ENCODE measurements at regions of chr14 and their contacts with region 1.

Region 1: GRCh38 chr14:23446291-23446851 is 10.9 kb upstream of the MYH7 start:
- DNase-seq: no peak
- ATAC-seq: peak; percentile 27

Region 2: GRCh38 chr14:23245282-23245681 is 201.1 kb before region 1 on chr14:
- intact Hi-C with region 1: no loop called
- DNase-seq: no peak
- ATAC-seq: no peak

Region 3: GRCh38 chr14:23327947-23328744 is 118.2 kb before region 1 on chr14:
- intact Hi-C with region 1: loop called (anchors 5 kb)
- DNase-seq: no peak
- ATAC-seq: peak; percentile 68

Region 4: DNA sequence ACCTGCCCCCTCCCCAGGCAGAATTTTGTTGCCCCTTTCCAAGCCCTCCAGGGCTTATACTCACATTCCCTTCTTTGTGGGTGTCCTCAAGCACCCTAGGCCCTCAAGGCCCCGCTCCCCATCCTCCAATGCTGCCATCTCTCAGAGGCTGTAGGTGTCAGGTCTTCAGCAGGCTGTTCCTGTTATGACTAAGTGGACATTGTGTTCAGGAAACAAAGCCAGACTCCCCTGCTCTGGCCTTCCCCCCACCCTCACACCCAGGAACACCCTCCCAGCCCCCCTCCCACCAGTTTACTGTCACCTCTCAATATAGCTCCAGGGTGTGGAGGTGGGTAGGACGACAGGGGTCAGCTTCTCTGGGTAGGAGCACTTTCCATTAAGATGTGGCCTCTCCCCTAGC is 36.9 kb before region 1 on chr14:
- intact Hi-C with region 1: loop called (anchors 1 kb)
- DNase-seq: peak; percentile 55
- ATAC-seq: peak; percentile 32

Region 5: DNA sequence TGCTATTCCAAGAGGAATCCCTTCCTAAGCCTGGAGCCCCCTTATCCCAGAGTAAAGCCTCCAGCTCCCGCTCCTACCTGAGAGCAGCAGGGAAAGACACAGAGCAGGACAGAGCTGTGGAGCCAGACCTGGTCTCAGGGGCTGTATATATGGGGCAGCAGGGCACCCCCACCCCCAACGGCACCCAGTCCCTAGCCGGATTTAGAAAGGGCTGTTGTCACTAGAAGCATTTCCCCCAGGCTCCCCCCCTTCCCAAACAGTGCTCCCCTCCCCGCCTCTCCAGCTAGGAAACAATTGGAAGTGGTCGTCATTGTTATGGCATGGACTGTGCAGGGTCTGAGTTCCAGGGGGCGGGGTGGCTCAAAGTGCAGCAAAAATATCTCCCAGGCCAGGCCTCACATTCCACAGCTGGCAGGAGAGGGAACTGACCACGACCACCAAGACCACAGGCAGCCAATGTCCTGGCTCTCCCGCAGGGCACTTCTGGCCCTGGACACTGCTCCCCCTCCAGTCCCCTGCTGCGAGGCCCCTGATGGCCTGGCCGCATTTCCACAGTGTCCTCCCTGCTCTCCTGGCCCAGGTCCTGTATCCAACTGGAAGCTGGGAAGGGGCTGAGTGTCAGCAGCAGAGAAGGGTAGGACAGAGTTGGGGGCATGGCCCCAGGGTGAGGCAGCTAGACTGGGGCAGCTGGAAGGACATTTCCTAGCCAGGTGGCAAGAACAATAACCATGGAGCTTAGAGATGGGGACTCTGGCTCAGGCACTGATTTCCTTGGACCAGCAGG is 10.6 kb before region 1 on chr14 and contains the start of gene MYH7:
- intact Hi-C with region 1: loop called (anchors 1 kb)
- DNase-seq: no peak
- ATAC-seq: peak; percentile 59
- total RNA-seq, gene MYH7: 11,833 TPM

Measured in Right ventricle myocardium inferior (tissue), 1 donor.